T-cell (primary cell): ENCODE measurements at regions of chr2 and their contacts with region 1.

Region 1: GRCh38 chr2:171703574-171704347 is 16.5 kb downstream of the DYNC1I2 start:
- DNase-seq: peak in 3 of 35 experiments; percentile 2 to 58 (median 6)
- ATAC-seq: no peak
- H3K4me3 ChIP-seq: no peak overlapping the region
- H3K4me3 Mint-ChIP-seq: no peak overlapping the region
- H3K27ac ChIP-seq: no peak overlapping the region
- H3K27ac Mint-ChIP-seq: peak overlapping the region; percentile 12 to 52
- H3K4me1 ChIP-seq: peaks cover 0 to 4% of the 10 kb centered on the region in 2 experiments
- H3K4me1 Mint-ChIP-seq: peaks cover 8 to 13% (median 10%) of the 10 kb centered on the region in 3 donors
- H3K27me3 ChIP-seq: no peaks in the 10 kb centered on the region
- H3K27me3 Mint-ChIP-seq: no peaks in the 10 kb centered on the region

Region 2: DNA sequence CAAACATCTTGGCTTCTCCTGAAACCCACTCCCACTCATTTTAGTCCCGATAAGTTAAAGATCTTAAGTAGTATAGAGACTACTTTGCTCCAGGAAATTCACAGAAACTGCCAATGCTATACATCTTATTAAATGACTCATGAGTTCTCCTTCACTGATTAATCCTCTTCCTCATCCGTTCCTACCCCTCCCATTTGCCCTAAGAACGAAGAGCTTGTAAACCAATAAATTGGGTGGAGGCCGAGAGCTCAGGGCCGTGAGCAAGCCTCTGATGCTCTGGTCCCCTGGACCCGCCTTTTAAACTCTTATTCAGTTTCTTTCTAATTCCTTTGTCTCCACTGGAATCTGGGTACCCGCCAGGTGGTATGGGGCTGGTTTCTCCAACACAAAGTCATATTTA is 338.5 kb before region 1 on chr2:
- CTCF ChIA-PET with region 1: no interaction called
- POLR2A ChIA-PET with region 1: no interaction called
- DNase-seq: no peak
- ATAC-seq: no peak
- H3K4me3 ChIP-seq: no peak overlapping the region
- H3K4me3 Mint-ChIP-seq: no peak overlapping the region
- H3K27ac ChIP-seq: no peak overlapping the region
- H3K27ac Mint-ChIP-seq: no peak overlapping the region
- H3K4me1 ChIP-seq: no peaks in the 10 kb centered on the region
- H3K4me1 Mint-ChIP-seq: no peaks in the 10 kb centered on the region
- H3K27me3 ChIP-seq: no peaks in the 10 kb centered on the region
- H3K27me3 Mint-ChIP-seq: no peaks in the 10 kb centered on the region

Region 3: GRCh38 chr2:171574149-171574795 is 129.5 kb before region 1 on chr2:
- CTCF ChIA-PET with region 1: interaction called in 1 of 2 experiments, 3 read pairs
- POLR2A ChIA-PET with region 1: interaction called in 1 of 2 experiments, 10 read pairs
- DNase-seq: peak; percentile 58 to 87 (median 75)
- ATAC-seq: peak; percentile 93 to 98 (median 96)
- H3K4me3 ChIP-seq: no peak overlapping the region
- H3K4me3 Mint-ChIP-seq: no peak overlapping the region
- H3K27ac ChIP-seq: no peak overlapping the region
- H3K27ac Mint-ChIP-seq: peak overlapping the region in 1 of 2 donors; percentile 72
- H3K4me1 ChIP-seq: peaks cover 0 to 5% of the 10 kb centered on the region in 2 experiments
- H3K4me1 Mint-ChIP-seq: peaks cover 0 to 6% (median 6%) of the 10 kb centered on the region in 3 donors
- H3K27me3 ChIP-seq: peaks cover 0 to 3% of the 10 kb centered on the region in 2 experiments
- H3K27me3 Mint-ChIP-seq: peaks cover 0 to 8% of the 10 kb centered on the region in 2 donors

Region 4: GRCh38 chr2:171598713-171599319 is 104.9 kb before region 1 on chr2:
- CTCF ChIA-PET with region 1: no interaction called
- POLR2A ChIA-PET with region 1: no interaction called
- DNase-seq: peak in 30 of 35 experiments; percentile 3 to 74 (median 29)
- ATAC-seq: peak; percentile 85 to 97 (median 94)
- H3K4me3 ChIP-seq: no peak overlapping the region
- H3K4me3 Mint-ChIP-seq: no peak overlapping the region
- H3K27ac ChIP-seq: no peak overlapping the region
- H3K27ac Mint-ChIP-seq: no peak overlapping the region
- H3K4me1 ChIP-seq: no peaks in the 10 kb centered on the region
- H3K4me1 Mint-ChIP-seq: peaks cover 1 to 5% (median 4%) of the 10 kb centered on the region in 3 donors
- H3K27me3 ChIP-seq: peaks cover 2 to 3% of the 10 kb centered on the region in 2 experiments
- H3K27me3 Mint-ChIP-seq: peaks cover 2 to 7% of the 10 kb centered on the region in 2 donors

Region 5: DNA sequence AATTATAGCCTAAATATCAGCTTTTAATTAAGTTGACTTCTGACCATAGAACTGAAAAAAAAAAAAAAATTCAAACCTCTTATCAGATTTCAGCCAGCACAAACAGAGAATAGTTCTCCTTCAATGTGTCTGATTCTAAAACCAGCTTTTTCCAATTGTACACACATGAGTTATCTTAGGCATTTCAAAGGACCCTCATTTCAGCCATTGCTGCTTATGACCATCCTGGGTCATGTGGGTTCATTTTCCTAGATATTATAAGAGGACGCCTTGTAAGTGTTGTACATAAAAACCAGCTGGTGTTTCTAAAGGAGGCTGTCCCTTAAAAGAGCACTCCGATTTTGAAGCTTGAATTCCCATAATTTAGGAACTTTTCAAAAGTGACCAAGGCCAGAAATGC is 78.8 kb before region 1 on chr2:
- CTCF ChIA-PET with region 1: no interaction called
- POLR2A ChIA-PET with region 1: no interaction called
- DNase-seq: no peak
- ATAC-seq: no peak
- H3K4me3 ChIP-seq: no peak overlapping the region
- H3K4me3 Mint-ChIP-seq: no peak overlapping the region
- H3K27ac ChIP-seq: no peak overlapping the region
- H3K27ac Mint-ChIP-seq: no peak overlapping the region
- H3K4me1 ChIP-seq: no peaks in the 10 kb centered on the region
- H3K4me1 Mint-ChIP-seq: no peaks in the 10 kb centered on the region
- H3K27me3 ChIP-seq: peaks cover 0 to 14% of the 10 kb centered on the region in 2 experiments
- H3K27me3 Mint-ChIP-seq: peaks cover 8 to 9% of the 10 kb centered on the region in 2 donors

Region 6: GRCh38 chr2:171687287-171688128 is 16.3 kb before region 1 on chr2 and contains the start of gene DYNC1I2:
- CTCF ChIA-PET with region 1: interaction called, 5 to 42 read pairs
- POLR2A ChIA-PET with region 1: no interaction called
- DNase-seq: peak; percentile 21 to 81 (median 53)
- ATAC-seq: peak; percentile 88 to 94 (median 92)
- H3K4me3 ChIP-seq: peak within 1 kb of the TSS; percentile 68 to 97
- H3K4me3 Mint-ChIP-seq: peak within 1 kb of the TSS; percentile 93 to 97 (median 96)
- H3K27ac ChIP-seq: peak within 1 kb of the TSS; percentile 47
- H3K27ac Mint-ChIP-seq: peak within 1 kb of the TSS; percentile 87 to 95
- H3K4me1 ChIP-seq: peaks cover 8 to 12% of the 10 kb centered on the region in 2 experiments
- H3K4me1 Mint-ChIP-seq: peaks cover 32 to 36% (median 33%) of the 10 kb centered on the region in 3 donors
- H3K27me3 ChIP-seq: peaks cover 0 to 3% of the 10 kb centered on the region in 2 experiments
- H3K27me3 Mint-ChIP-seq: no peaks in the 10 kb centered on the region
- total RNA-seq, gene DYNC1I2: 25.6 to 43.7 (median 42.4) TPM

Region 7: GRCh38 chr2:172484253-172484652 is 780.5 kb after region 1 on chr2:
- CTCF ChIA-PET with region 1: interaction called in 1 of 2 experiments, 10 read pairs
- POLR2A ChIA-PET with region 1: no interaction called
- DNase-seq: peak in 3 of 35 experiments; percentile 33 to 61 (median 39)
- ATAC-seq: peak; percentile 59 to 70 (median 64)
- H3K4me3 ChIP-seq: no peak overlapping the region
- H3K4me3 Mint-ChIP-seq: peak overlapping the region in 1 of 3 donors; percentile 58
- H3K27ac ChIP-seq: no peak overlapping the region
- H3K27ac Mint-ChIP-seq: peak overlapping the region; percentile 82 to 85
- H3K4me1 ChIP-seq: peaks cover 26 to 41% of the 10 kb centered on the region in 2 experiments
- H3K4me1 Mint-ChIP-seq: peaks cover 61 to 72% (median 64%) of the 10 kb centered on the region in 3 donors
- H3K27me3 ChIP-seq: no peaks in the 10 kb centered on the region
- H3K27me3 Mint-ChIP-seq: no peaks in the 10 kb centered on the region

Region 8: DNA sequence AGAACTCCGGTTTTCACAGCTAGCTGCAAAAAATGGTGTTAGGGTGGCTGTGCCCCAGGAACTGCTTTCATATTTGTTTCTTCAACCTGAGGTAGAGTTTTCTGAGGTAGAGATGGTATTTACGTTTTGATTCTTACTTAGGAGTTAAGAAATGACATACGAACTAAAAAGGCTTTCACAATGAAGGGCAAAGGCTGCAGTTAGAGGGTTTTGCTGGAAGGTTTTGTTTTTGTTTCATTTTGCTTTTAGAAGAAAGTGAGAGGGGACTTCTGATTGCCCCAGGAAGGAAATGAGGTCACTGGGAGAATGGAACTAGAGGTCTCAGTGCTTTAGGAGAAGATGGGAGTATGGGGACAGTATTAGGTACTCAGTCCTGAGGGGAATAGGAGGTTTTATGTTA is 1666.4 kb after region 1 on chr2:
- CTCF ChIA-PET with region 1: no interaction called
- POLR2A ChIA-PET with region 1: no interaction called
- DNase-seq: peak in 1 of 35 experiments; percentile 31
- ATAC-seq: peak in 1 of 4 experiments; percentile 20
- H3K4me3 ChIP-seq: no peak overlapping the region
- H3K4me3 Mint-ChIP-seq: peak overlapping the region in 2 of 3 donors; percentile 4 to 32
- H3K27ac ChIP-seq: peak overlapping the region; percentile 2
- H3K27ac Mint-ChIP-seq: peak overlapping the region; percentile 36 to 80
- H3K4me1 ChIP-seq: peaks cover 0 to 10% of the 10 kb centered on the region in 2 experiments
- H3K4me1 Mint-ChIP-seq: peaks cover 12 to 15% (median 15%) of the 10 kb centered on the region in 3 donors
- H3K27me3 ChIP-seq: no peaks in the 10 kb centered on the region
- H3K27me3 Mint-ChIP-seq: no peaks in the 10 kb centered on the region